Activated B cell treated with CpG ODN at 0.5 μM for 24 hours (primary cell): ENCODE measurements at regions of chr6 and their contacts with region 1.

Region 1: GRCh38 chr6:166775180-166776081 is 148.4 kb upstream of the RPS6KA2 start:
- DNase-seq: no peak
- ATAC-seq: peak; percentile 60
- H3K4me3 Mint-ChIP-seq: no peak overlapping the region
- H3K27ac Mint-ChIP-seq: no peak overlapping the region
- H3K4me1 Mint-ChIP-seq: no peaks in the 10 kb centered on the region
- H3K27me3 Mint-ChIP-seq: peaks cover 13% of the 10 kb centered on the region
- CTCF ChIP-seq: peak; percentile 45

Region 2: GRCh38 chr6:166351715-166352285 is 423.6 kb before region 1 on chr6:
- CTCF ChIA-PET with region 1: no interaction called
- POLR2A ChIA-PET with region 1: no interaction called
- intact Hi-C with region 1: no loop called
- DNase-seq: no peak
- ATAC-seq: peak; percentile 100
- H3K4me3 Mint-ChIP-seq: peak overlapping the region; percentile 48
- H3K27ac Mint-ChIP-seq: peak overlapping the region; percentile 68
- H3K4me1 Mint-ChIP-seq: peaks cover 8% of the 10 kb centered on the region
- H3K27me3 Mint-ChIP-seq: no peaks in the 10 kb centered on the region
- CTCF ChIP-seq: no peak

Region 3: DNA sequence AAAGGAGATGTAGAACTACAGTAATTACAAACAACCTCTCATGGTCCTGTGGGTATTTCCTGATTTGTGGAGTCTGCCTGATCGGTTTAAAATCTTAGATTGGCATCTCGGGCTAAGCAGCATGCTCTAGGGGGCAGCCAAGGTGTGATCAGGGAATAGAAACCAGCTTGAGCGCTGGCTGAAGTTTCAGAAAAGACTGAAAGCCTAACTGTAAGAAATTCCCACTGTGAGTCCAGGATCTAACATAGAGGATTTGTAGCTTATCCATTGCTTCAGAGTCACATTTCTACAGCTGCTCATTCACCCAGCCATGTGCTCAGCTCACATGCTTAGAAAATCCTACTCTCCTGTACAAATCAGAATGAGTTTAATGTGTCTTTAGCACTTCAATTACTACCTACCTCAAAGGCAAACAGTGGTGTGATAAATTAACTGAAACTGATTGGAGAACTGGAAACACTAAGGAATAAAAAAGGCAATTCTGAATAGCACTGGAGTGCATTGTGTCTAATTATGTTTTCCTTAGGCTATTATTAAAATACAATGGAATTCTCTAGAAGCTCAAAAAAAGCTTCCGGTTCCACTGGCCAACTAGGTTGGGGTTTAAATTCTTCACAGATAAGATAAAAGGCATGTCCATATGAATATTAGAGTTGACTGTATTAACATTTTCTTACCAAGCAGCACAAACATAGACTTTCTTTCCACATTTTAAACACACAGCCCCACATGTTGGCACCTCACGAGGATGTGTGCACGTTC is 318.9 kb before region 1 on chr6:
- CTCF ChIA-PET with region 1: interaction called, 3 read pairs
- POLR2A ChIA-PET with region 1: no interaction called
- intact Hi-C with region 1: loop called (anchors 10 kb)
- DNase-seq: no peak
- ATAC-seq: no peak
- H3K4me3 Mint-ChIP-seq: no peak overlapping the region
- H3K27ac Mint-ChIP-seq: no peak overlapping the region
- H3K4me1 Mint-ChIP-seq: peaks cover 16% of the 10 kb centered on the region
- H3K27me3 Mint-ChIP-seq: no peaks in the 10 kb centered on the region
- CTCF ChIP-seq: no peak

Region 4: GRCh38 chr6:166751051-166751595 is 24.3 kb before region 1 on chr6:
- CTCF ChIA-PET with region 1: interaction called, 3 read pairs
- POLR2A ChIA-PET with region 1: no interaction called
- intact Hi-C with region 1: loop called (anchors 1 kb)
- DNase-seq: peak; percentile 63
- ATAC-seq: peak; percentile 99
- H3K4me3 Mint-ChIP-seq: peak overlapping the region; percentile 85
- H3K27ac Mint-ChIP-seq: peak overlapping the region; percentile 80
- H3K4me1 Mint-ChIP-seq: peaks cover 28% of the 10 kb centered on the region
- H3K27me3 Mint-ChIP-seq: peaks cover 10% of the 10 kb centered on the region
- CTCF ChIP-seq: no peak

Region 5: GRCh38 chr6:166806962-166807757 is 31.7 kb after region 1 on chr6:
- CTCF ChIA-PET with region 1: no interaction called
- POLR2A ChIA-PET with region 1: no interaction called
- intact Hi-C with region 1: no loop called
- DNase-seq: no peak
- ATAC-seq: no peak
- H3K4me3 Mint-ChIP-seq: no peak overlapping the region
- H3K27ac Mint-ChIP-seq: no peak overlapping the region
- H3K4me1 Mint-ChIP-seq: no peaks in the 10 kb centered on the region
- H3K27me3 Mint-ChIP-seq: no peaks in the 10 kb centered on the region
- CTCF ChIP-seq: no peak

Region 6: GRCh38 chr6:167285077-167285770 is 509.8 kb after region 1 on chr6:
- CTCF ChIA-PET with region 1: interaction called, 24 read pairs
- POLR2A ChIA-PET with region 1: no interaction called
- intact Hi-C with region 1: loop called (anchors 1 kb)
- DNase-seq: no peak
- ATAC-seq: no peak
- H3K4me3 Mint-ChIP-seq: no peak overlapping the region
- H3K27ac Mint-ChIP-seq: no peak overlapping the region
- H3K4me1 Mint-ChIP-seq: no peaks in the 10 kb centered on the region
- H3K27me3 Mint-ChIP-seq: peaks cover 1% of the 10 kb centered on the region
- CTCF ChIP-seq: no peak

Region 7: GRCh38 chr6:167291623-167292300 is 516.3 kb after region 1 on chr6:
- CTCF ChIA-PET with region 1: interaction called, 24 read pairs
- POLR2A ChIA-PET with region 1: no interaction called
- intact Hi-C with region 1: loop called (anchors 1 kb)
- DNase-seq: no peak
- ATAC-seq: no peak
- H3K4me3 Mint-ChIP-seq: no peak overlapping the region
- H3K27ac Mint-ChIP-seq: no peak overlapping the region
- H3K4me1 Mint-ChIP-seq: no peaks in the 10 kb centered on the region
- H3K27me3 Mint-ChIP-seq: peaks cover 2% of the 10 kb centered on the region
- CTCF ChIP-seq: no peak